ENCODE measurements at regions of chr3 and their contacts with region 1.

Region 1: DNA sequence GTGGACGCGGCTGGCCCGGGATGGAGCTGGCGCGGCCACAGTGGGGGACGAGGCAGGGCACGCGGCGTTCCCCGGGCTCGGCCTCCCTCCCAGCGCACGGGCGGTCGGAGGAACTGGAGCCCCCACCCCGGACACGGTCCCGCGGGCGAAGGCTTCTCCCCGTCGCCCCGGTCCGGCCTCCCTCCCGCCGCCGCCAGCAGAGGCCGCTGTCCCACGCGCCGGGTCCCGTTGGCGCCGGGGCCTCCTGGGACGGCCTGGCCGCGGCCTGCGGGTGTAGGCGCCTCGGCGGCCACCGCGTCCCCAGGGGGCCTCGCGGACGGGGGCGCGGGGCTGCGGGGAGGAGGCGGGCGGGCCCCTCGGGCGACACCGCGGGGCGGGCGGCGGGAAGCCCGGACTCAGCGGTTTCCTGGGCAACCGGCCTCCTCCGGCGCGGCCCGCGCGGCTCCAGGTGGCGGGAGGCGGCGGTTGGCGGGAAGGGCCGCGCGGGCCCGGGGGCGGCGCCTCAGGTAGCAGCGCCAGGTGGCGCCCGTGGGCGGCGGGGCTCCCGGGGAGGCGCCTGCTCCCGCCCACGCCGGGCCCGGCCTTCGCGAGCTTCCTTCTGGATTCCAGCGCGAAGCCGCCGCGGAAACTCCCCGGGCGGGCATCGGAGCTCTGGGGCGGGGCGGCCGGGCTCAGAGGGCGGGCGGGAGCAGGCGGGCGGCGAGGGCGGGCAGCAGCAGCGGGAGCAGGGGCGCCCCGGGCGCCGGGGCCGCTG is 26.7 kb downstream of the MELTF start:
- DNase-seq: peak; percentile 59
- ATAC-seq: peak; percentile 52
- H3K4me3 Mint-ChIP-seq: no peak overlapping the region
- H3K27ac Mint-ChIP-seq: no peak overlapping the region
- H3K4me1 Mint-ChIP-seq: peaks cover 15% of the 10 kb centered on the region
- H3K27me3 Mint-ChIP-seq: peaks cover 29% of the 10 kb centered on the region
- CTCF ChIP-seq: peak; percentile 46

Region 2: GRCh38 chr3:197023241-197023997 is 20.5 kb after region 1 on chr3:
- CTCF ChIA-PET with region 1: interaction called, 48 read pairs
- POLR2A ChIA-PET with region 1: no interaction called
- DNase-seq: no peak
- ATAC-seq: no peak
- H3K4me3 Mint-ChIP-seq: no peak overlapping the region
- H3K27ac Mint-ChIP-seq: no peak overlapping the region
- H3K4me1 Mint-ChIP-seq: peaks cover 32% of the 10 kb centered on the region
- H3K27me3 Mint-ChIP-seq: peaks cover 5% of the 10 kb centered on the region
- CTCF ChIP-seq: no peak

Region 3: DNA sequence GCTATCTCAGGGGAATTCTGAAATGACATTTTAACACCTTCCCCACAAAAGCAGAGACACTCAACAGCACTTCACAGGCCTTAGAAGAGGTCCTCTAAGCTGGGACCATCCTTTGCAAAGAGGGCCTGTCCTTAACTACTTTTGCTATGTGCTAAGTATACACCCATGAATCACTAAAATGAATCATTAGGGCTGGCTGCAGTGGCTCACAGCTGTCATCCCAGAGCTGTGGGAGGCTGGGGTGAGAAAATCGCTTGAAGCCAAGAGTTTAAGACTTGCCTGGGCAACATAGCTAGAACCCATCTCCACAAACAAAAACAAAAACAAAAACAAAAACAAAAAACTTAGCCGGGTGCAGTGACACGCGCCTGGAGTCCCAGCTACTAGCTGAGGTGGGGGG is 80.6 kb after region 1 on chr3:
- CTCF ChIA-PET with region 1: no interaction called
- POLR2A ChIA-PET with region 1: no interaction called
- DNase-seq: no peak
- ATAC-seq: no peak
- H3K4me3 Mint-ChIP-seq: no peak overlapping the region
- H3K27ac Mint-ChIP-seq: no peak overlapping the region
- H3K4me1 Mint-ChIP-seq: peaks cover 3% of the 10 kb centered on the region; the same call in 1 of the 2 replicates
- H3K27me3 Mint-ChIP-seq: no peaks in the 10 kb centered on the region
- CTCF ChIP-seq: no peak

Measured in WTC11 (cell line).